Dorsolateral prefrontal cortex (tissue), 120 donors: ENCODE measurements at regions of chr1 and their contacts with region 1.

Region 1: DNA sequence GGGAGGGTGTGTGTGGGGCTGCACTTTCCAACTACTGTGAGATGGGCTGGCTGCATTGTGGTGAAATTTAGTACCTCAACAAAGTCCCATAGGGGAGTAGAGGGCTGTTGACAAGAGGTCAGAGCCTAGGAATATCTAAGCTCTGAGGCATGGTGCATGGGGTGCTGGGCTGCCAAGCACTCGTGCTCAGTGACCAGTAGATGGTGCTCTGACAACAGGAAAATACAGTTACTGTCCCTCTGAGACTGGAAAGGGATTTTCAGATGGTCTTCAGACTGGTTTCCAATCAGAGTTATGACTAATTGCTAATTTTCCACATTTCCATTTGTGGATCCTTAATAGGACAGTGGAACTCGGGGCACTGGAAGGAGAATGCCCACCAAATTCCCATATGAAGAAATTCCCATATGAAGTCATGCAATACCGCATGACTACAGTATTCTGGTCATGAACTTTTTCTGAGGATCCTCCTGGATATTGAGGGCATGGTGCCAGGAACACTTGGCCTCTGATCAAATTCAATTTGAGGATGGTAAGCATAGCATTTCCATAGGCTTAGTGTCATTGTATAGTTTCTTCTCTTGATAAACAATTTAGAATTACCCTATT is 4.1 kb upstream of the CACNA1E start:
- DNase-seq: peak in 7 of 10 donors; percentile 29 to 73 (median 66)
- H3K4me3 ChIP-seq: no peak overlapping the region
- H3K27ac ChIP-seq: no peak overlapping the region
- H3K27me3 ChIP-seq: peaks cover 0 to 24% (median under 1%) of the 10 kb centered on the region in 45 donors
- CTCF ChIP-seq: peak; percentile 51 to 97 (median 88)

Region 2: DNA sequence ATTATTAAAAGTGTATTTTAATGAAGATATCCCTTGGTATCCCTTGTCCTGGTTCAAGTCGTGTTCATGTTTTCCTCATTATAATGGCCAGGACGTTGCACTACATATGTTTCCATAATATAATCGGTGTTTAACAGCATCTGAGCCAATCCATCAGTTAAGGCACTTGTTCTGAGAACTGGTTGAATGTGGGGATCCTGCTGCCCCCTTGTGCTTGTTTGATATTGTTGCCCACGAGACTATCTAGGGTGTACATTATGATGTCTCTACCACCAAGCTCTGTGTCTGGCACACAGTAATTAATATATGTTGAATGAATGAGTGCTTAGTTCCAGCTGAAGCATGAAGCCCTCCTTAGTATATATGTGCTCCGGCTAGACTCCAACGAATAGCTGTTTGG is 197.0 kb after region 1 on chr1:
- intact Hi-C with region 1: loop called in 1 of 2 experiments (anchors 1 kb)
- DNase-seq: peak in 7 of 10 donors; percentile 30 to 81 (median 63)
- H3K4me3 ChIP-seq: peak overlapping the region in 20 of 59 donors; percentile 0 to 41 (median 18)
- H3K27ac ChIP-seq: peak overlapping the region in 15 of 59 donors; percentile 21 to 90 (median 73)
- H3K27me3 ChIP-seq: no peaks in the 10 kb centered on the region
- CTCF ChIP-seq: peak; percentile 31 to 76 (median 59)

Region 3: DNA sequence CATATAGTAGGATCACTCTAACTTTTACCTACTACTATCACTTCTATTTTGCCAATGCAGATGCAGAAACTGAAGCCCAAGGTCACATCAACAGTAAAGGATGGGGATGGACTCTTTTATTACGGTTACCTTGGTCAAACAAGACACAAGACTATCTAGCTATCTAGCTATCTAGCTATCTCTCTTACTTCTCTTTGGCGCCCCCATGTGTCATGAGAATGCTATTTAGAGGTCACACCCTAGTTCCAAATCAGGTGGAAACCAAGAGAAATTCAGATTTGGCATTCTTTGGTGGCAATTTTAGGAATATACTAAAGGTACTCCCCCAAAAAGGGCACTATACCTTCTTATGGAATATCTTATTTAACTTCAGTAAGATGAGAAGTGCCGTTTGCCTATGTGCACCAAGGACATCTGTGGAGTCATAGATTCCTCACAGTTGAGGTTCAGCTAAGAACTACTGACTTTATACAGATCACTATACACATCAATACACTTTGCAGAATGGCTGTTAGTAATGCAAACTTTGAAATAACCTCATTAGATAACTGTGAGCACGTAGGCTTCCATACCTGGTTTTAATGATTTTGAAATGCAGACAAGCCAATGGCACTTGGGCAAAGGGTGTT is 575.6 kb after region 1 on chr1:
- intact Hi-C with region 1: loop called (anchors 10 kb)
- DNase-seq: peak in 3 of 10 donors; percentile 19 to 44 (median 39)
- H3K4me3 ChIP-seq: no peak overlapping the region
- H3K27ac ChIP-seq: no peak overlapping the region
- H3K27me3 ChIP-seq: peaks cover 0 to 24% (median 4%) of the 10 kb centered on the region in 45 donors
- CTCF ChIP-seq: peak in 53 of 56 donors; percentile 30 to 74 (median 53)

Region 4: DNA sequence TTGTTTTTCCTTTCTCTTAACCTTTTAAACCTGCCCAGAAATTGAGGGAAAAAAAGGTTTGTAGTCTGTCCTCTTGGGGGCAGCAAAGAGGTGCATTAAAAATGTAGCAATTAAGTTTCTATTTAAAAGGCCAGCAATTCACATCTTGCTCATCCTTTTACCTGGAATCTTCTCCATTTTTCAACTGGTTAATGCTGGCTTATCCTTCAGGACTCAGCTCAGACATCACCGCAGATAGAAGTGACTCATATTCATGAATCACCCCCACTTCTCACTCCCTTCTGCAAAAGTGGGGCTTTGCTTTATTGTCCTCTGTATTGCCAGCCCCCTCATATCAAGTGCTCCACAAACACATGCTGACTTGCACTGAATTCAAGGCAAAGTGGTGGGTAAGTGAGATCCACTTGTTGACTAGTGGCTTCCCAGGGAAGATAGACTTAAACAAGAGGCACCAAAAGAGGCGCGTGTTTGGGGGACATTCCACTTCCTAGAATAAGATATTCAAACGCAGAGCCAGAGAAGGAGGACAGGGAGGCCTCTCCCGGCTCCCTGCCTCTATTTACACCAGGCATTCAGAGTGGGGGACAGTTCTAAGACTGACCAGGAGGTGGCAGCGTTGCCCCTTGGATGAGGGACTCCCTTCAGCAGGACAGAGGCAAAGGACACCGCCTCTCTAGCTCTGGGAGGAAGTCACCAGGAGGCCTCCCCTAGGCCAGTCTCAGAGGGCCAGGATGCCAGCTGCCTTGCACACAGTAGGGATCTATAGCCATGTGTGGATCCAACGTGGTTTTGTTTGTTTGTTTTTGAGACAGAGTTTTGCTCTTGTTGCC is 605.5 kb after region 1 on chr1:
- intact Hi-C with region 1: loop called in 1 of 2 experiments (anchors 2 kb)
- DNase-seq: peak; percentile 61 to 96 (median 90)
- H3K4me3 ChIP-seq: peak overlapping the region in 13 of 59 donors; percentile 1 to 37 (median 9)
- H3K27ac ChIP-seq: peak overlapping the region in 55 of 59 donors; percentile 17 to 88 (median 71)
- H3K27me3 ChIP-seq: no peaks in the 10 kb centered on the region
- CTCF ChIP-seq: peak; percentile 77 to 99 (median 90)

Region 5: GRCh38 chr1:182397771-182398393 is 918.6 kb after region 1 on chr1:
- intact Hi-C with region 1: loop called (anchors 5 to 10 kb)
- DNase-seq: no peak
- H3K4me3 ChIP-seq: no peak overlapping the region
- H3K27ac ChIP-seq: peak overlapping the region in 12 of 59 donors; percentile 9 to 99 (median 80)
- H3K27me3 ChIP-seq: no peaks in the 10 kb centered on the region
- CTCF ChIP-seq: no peak